Naive thymus-derived CD4-positive, alpha-beta T cell (primary cell): ENCODE measurements at regions of chr9 and their contacts with region 1.

Region 1: DNA sequence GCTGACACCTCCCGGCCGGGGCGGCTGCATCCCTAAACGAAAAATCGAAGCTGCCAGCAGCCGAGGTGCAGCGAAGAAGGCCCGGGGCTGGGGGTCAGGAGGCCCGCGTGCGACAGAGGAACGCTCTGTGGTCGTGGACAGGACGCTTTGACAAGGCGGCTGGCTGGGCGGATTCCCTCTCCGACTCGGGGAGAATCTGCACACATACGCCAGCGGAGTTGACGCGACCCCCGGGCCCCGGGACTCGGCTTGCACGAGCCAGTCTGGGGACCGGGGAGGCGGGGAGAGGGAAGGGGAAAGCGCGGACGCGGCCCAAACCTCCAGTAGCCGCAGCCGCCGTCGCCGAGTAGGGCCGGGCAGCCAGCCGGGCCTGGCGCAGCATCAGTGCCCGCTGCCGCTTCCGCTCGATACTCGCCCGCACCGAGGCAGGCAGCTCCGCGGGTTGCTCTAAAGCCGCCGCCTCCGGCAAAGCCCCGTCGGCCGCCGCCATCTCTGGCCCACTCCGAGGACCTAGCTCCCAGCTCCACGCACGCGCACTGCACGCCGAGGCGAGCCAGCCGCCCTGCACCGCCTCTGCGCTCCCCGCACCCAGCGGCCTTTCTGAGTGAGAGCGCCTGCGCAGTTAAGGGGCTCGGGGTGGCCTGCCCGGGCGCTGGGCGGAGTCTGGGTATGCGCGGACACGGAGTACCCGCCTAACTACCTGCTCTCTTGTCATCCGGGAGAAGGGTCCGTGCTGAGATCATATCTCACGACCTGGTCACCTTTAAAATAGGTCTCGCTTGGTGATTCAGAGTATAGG is at the start of gene XPA:
- DNase-seq: peak; percentile 95 to 98 (median 96)
- ATAC-seq: peak; percentile 97
- H3K4me3 ChIP-seq: peak within 1 kb of the TSS; percentile 68
- H3K4me3 Mint-ChIP-seq: peak within 1 kb of the TSS; percentile 87 to 96 (median 90)
- H3K27ac ChIP-seq: peak within 1 kb of the TSS; percentile 85
- H3K27ac Mint-ChIP-seq: peak within 1 kb of the TSS; percentile 85 to 98 (median 93)
- H3K4me1 ChIP-seq: peaks cover 32 to 38% of the 10 kb centered on the region in 2 donors
- H3K4me1 Mint-ChIP-seq: peaks cover 53 to 70% (median 65%) of the 10 kb centered on the region in 7 donors
- H3K27me3 ChIP-seq: no peaks in the 10 kb centered on the region
- H3K27me3 Mint-ChIP-seq: peaks cover 0 to 8% (median 0%) of the 10 kb centered on the region in 5 donors
- total RNA-seq, gene XPA: 16.7 to 30.3 (median 23.2) TPM

Region 2: GRCh38 chr9:97411789-97412625 is 285.0 kb before region 1 on chr9 and contains the start of gene TDRD7:
- CTCF ChIA-PET with region 1: no interaction called
- POLR2A ChIA-PET with region 1: no interaction called
- intact Hi-C with region 1: loop called (anchors 5 kb)
- DNase-seq: peak; percentile 82 to 96 (median 90)
- ATAC-seq: peak; percentile 96
- H3K4me3 ChIP-seq: peak within 1 kb of the TSS; percentile 49
- H3K4me3 Mint-ChIP-seq: peak within 1 kb of the TSS; percentile 73 to 95 (median 86)
- H3K27ac ChIP-seq: peak within 1 kb of the TSS; percentile 85
- H3K27ac Mint-ChIP-seq: peak within 1 kb of the TSS; percentile 61 to 93 (median 86)
- H3K4me1 ChIP-seq: peaks cover 8 to 13% of the 10 kb centered on the region in 2 donors
- H3K4me1 Mint-ChIP-seq: peaks cover 12 to 39% (median 34%) of the 10 kb centered on the region in 7 donors
- H3K27me3 ChIP-seq: no peaks in the 10 kb centered on the region
- H3K27me3 Mint-ChIP-seq: peaks cover 16 to 34% (median 16%) of the 10 kb centered on the region in 5 donors
- total RNA-seq, gene TDRD7: 7.8 to 15.0 (median 10.8) TPM

Region 3: DNA sequence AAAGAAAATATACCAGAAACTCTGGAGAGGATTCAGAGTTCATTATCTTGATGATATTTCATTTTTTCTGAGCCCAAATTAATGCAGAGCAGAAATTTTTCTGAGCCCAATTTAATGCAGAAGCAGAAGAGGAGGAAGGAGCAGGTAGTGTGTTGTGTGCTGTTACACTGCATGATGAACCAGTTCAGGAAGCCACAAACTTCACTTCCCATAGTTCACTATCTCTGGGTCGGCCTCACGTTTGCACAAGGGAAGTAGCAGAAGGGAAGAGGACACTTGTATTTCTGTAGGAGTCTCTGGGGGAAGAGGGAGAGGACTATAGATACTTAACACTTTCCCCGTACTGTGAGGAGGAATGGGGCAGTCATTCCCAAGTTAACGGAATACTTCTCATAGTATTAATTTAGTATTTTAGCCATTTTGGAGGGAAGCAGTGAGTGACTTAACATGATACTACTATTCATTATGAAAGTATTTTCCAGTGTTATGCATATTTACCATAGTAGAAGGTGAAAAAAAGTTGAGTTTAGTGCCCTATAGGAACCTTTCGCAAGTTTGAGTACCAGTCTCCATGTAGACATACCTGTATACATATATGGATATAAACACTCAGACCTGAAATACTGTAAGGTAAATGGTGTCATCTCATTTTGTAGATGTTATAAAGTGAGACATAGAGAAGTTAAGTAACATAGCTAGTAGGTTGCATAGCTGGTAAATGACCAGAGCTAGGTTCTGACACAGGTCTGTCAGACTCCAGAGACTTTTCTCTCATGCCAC is 29.9 kb before region 1 on chr9:
- CTCF ChIA-PET with region 1: no interaction called
- POLR2A ChIA-PET with region 1: no interaction called
- intact Hi-C with region 1: loop called in 1 of 2 experiments (anchors 2 kb)
- DNase-seq: no peak
- ATAC-seq: peak; percentile 42
- H3K4me3 ChIP-seq: no peak overlapping the region
- H3K4me3 Mint-ChIP-seq: no peak overlapping the region
- H3K27ac ChIP-seq: no peak overlapping the region
- H3K27ac Mint-ChIP-seq: peak overlapping the region in 7 of 9 donors; percentile 18 to 59 (median 45)
- H3K4me1 ChIP-seq: no peaks in the 10 kb centered on the region
- H3K4me1 Mint-ChIP-seq: peaks cover 3 to 21% (median 15%) of the 10 kb centered on the region in 7 donors
- H3K27me3 ChIP-seq: no peaks in the 10 kb centered on the region
- H3K27me3 Mint-ChIP-seq: no peaks in the 10 kb centered on the region

Region 4: DNA sequence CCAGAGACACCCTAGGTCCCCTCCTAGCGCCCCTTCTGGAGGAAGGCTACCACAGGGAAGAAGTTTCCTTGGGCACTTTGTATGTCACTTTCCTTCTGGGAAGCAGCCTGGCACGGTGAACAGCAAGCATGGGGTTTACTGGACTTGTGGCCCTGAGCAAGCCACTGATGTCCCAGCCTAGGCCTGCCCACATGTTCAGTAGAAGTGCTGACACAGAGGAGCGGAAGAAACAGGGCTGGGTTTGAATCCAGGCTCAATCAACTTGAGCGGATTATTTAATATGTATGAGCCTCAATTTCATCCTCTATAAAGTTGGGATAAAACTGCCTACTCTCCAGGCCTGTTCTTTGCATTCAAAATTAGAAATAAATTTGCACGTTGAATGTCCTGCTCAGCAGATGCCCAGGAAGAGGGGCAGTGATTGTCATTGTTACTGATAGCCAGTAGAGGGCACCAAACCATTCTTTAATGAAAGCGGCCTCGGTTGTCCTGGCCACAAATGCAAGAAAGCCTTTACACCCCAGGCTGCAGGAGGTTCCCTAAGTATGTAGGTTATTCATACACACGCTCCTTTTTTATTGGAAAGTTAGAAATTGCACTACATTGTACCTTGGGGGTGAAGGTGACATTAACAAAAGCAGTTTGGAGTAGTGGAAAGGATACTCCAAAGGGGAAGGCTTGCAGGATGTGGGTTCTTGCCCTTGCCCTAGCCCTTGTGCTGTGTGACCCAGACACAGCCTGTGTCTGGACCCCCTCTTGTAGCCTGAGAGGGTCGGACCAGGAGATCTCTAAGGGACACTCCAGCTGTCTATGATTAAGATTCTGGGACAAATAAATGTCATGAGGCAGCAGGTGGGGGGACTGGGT is 13.6 kb after region 1 on chr9:
- CTCF ChIA-PET with region 1: no interaction called
- POLR2A ChIA-PET with region 1: interaction called, 4 read pairs
- intact Hi-C with region 1: loop called in 1 of 2 experiments (anchors 1 kb)
- DNase-seq: peak in 7 of 9 donors; percentile 32 to 65 (median 56)
- ATAC-seq: peak; percentile 92
- H3K4me3 ChIP-seq: no peak overlapping the region
- H3K4me3 Mint-ChIP-seq: peak overlapping the region in 5 of 10 donors; percentile 21 to 44 (median 38)
- H3K27ac ChIP-seq: no peak overlapping the region
- H3K27ac Mint-ChIP-seq: peak overlapping the region in 2 of 9 donors; percentile 6 to 46
- H3K4me1 ChIP-seq: peaks cover 17 to 18% of the 10 kb centered on the region in 2 donors
- H3K4me1 Mint-ChIP-seq: peaks cover 12 to 42% (median 22%) of the 10 kb centered on the region in 7 donors
- H3K27me3 ChIP-seq: no peaks in the 10 kb centered on the region
- H3K27me3 Mint-ChIP-seq: peaks cover 0 to 37% (median 13%) of the 10 kb centered on the region in 5 donors

Region 5: GRCh38 chr9:97853844-97854695 is 157.1 kb after region 1 on chr9:
- CTCF ChIA-PET with region 1: no interaction called
- POLR2A ChIA-PET with region 1: no interaction called
- intact Hi-C with region 1: loop called in 1 of 2 experiments (anchors 5 kb)
- DNase-seq: peak; percentile 47 to 72 (median 59)
- ATAC-seq: peak; percentile 87
- H3K4me3 ChIP-seq: peak overlapping the region; percentile 51
- H3K4me3 Mint-ChIP-seq: peak overlapping the region; percentile 85 to 93 (median 90)
- H3K27ac ChIP-seq: no peak overlapping the region
- H3K27ac Mint-ChIP-seq: peak overlapping the region in 6 of 9 donors; percentile 1 to 91 (median 73)
- H3K4me1 ChIP-seq: peaks cover 5 to 18% of the 10 kb centered on the region in 2 donors
- H3K4me1 Mint-ChIP-seq: peaks cover 9 to 39% (median 21%) of the 10 kb centered on the region in 7 donors
- H3K27me3 ChIP-seq: peaks cover 12 to 54% of the 10 kb centered on the region in 2 donors
- H3K27me3 Mint-ChIP-seq: peaks cover 62 to 86% (median 71%) of the 10 kb centered on the region in 5 donors

Region 6: DNA sequence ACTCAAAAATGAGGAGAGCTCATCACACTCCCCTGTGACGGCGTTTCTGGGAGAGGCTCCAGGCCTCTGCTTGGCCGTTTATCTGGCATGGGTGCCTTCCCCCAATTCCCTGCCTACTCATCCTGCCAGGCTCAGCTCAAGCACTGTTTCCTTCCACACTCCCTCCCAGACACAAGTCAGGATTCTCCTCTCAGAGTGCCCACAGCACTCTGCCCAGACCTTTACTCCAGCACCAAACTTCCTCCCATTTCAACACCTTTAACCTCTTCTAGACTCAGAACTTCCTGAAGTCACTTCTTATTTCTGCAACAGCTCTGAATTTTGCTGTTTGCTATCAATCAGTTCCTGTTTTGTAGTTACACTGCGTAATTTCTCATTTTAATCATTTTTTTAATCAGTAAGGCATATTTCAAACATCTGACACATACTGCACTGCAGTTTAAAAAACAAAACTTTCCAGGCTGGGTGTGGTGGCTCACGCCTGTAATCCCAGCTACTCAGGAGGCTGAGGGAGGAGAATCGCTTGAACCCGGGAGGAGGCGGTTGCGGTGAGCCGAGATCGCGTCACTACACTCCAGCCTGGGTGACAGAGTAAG is 209.3 kb after region 1 on chr9:
- CTCF ChIA-PET with region 1: interaction called, 3 read pairs
- POLR2A ChIA-PET with region 1: interaction called, 19 read pairs
- intact Hi-C with region 1: loop called in 1 of 2 experiments (anchors 5 kb)
- DNase-seq: peak in 7 of 9 donors; percentile 68 to 89 (median 79)
- ATAC-seq: peak; percentile 58
- H3K4me3 ChIP-seq: peak overlapping the region; percentile 51
- H3K4me3 Mint-ChIP-seq: peak overlapping the region; percentile 80 to 98 (median 92)
- H3K27ac ChIP-seq: peak overlapping the region; percentile 95
- H3K27ac Mint-ChIP-seq: peak overlapping the region; percentile 92 to 100 (median 98)
- H3K4me1 ChIP-seq: peaks cover 74 to 79% of the 10 kb centered on the region in 2 donors
- H3K4me1 Mint-ChIP-seq: peaks cover 61 to 94% (median 87%) of the 10 kb centered on the region in 7 donors
- H3K27me3 ChIP-seq: no peaks in the 10 kb centered on the region
- H3K27me3 Mint-ChIP-seq: no peaks in the 10 kb centered on the region

Region 7: GRCh38 chr9:99118782-99119466 is 1421.9 kb after region 1 on chr9:
- CTCF ChIA-PET with region 1: no interaction called
- POLR2A ChIA-PET with region 1: no interaction called
- intact Hi-C with region 1: no loop called
- DNase-seq: peak in 8 of 9 donors; percentile 40 to 79 (median 70)
- ATAC-seq: peak; percentile 99
- H3K4me3 ChIP-seq: peak overlapping the region; percentile 39
- H3K4me3 Mint-ChIP-seq: peak overlapping the region; percentile 69 to 92 (median 82)
- H3K27ac ChIP-seq: peak overlapping the region; percentile 62
- H3K27ac Mint-ChIP-seq: peak overlapping the region; percentile 39 to 96 (median 86)
- H3K4me1 ChIP-seq: peaks cover 59 to 76% of the 10 kb centered on the region in 2 donors
- H3K4me1 Mint-ChIP-seq: peaks cover 57 to 97% (median 89%) of the 10 kb centered on the region in 7 donors
- H3K27me3 ChIP-seq: no peaks in the 10 kb centered on the region
- H3K27me3 Mint-ChIP-seq: no peaks in the 10 kb centered on the region